ENCODE measurements at regions of chr6 and their contacts with region 1.

Region 1: GRCh38 chr6:25942561-25943147 is 12.2 kb upstream of the SLC17A2 start:
- DNase-seq: peak in 6 of 9 donors; percentile 11 to 42 (median 27)
- ATAC-seq: peak; percentile 62
- H3K4me3 ChIP-seq: no peak overlapping the region
- H3K4me3 Mint-ChIP-seq: no peak overlapping the region
- H3K27ac ChIP-seq: no peak overlapping the region
- H3K27ac Mint-ChIP-seq: no peak overlapping the region
- H3K4me1 ChIP-seq: no peaks in the 10 kb centered on the region
- H3K4me1 Mint-ChIP-seq: peaks cover 4 to 26% (median 7%) of the 10 kb centered on the region in 7 donors
- H3K27me3 ChIP-seq: no peaks in the 10 kb centered on the region
- H3K27me3 Mint-ChIP-seq: peaks cover 0 to 3% (median 0%) of the 10 kb centered on the region in 5 donors

Region 2: GRCh38 chr6:25263657-25264056 is 679.0 kb before region 1 on chr6:
- CTCF ChIA-PET with region 1: no interaction called
- POLR2A ChIA-PET with region 1: no interaction called
- intact Hi-C with region 1: loop called (anchors 2 to 5 kb)
- DNase-seq: no peak
- ATAC-seq: no peak
- H3K4me3 ChIP-seq: no peak overlapping the region
- H3K4me3 Mint-ChIP-seq: no peak overlapping the region
- H3K27ac ChIP-seq: no peak overlapping the region
- H3K27ac Mint-ChIP-seq: no peak overlapping the region
- H3K4me1 ChIP-seq: no peaks in the 10 kb centered on the region
- H3K4me1 Mint-ChIP-seq: peaks cover 0 to 4% (median 3%) of the 10 kb centered on the region in 7 donors
- H3K27me3 ChIP-seq: no peaks in the 10 kb centered on the region
- H3K27me3 Mint-ChIP-seq: peaks cover 0 to 25% (median 3%) of the 10 kb centered on the region in 5 donors

Region 3: DNA sequence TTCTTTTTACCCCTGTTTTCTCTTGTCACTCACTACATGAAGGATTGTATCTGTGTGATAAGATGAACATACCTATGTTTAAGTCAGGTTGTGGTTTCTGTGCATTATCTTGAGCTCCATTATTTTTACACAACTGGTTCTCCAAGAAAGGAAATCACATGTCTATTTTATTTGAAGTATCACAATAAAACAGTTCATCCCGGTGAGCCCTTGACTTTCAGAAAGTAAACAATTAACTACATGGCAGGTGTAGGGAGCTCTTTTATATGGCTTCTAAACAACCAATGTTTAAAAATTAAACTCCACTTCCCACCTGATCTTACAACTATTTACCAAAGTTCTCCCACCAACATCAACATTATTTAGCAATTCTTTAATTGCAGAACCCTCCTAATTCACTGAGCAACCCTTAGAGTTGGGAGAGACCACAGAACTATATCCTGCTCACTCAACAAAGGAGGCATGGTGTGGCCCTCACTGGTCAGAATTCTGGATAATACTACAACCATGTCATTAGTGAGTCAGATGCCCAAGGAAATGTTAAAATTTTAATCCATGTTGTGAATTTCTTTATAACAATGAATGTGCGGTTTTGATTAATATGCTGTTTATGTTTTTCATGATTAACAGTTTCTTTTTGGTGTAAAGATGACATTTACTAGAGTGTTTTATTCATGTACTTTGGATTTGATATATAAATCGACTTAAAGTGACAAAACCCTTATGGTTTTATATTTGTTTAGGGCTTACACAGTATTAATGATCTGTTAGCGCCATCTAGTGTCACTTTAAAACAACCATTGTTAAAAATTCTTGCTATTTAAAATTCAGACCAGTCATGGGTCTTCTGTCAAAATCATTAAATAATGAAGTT is 340.6 kb before region 1 on chr6:
- CTCF ChIA-PET with region 1: no interaction called
- POLR2A ChIA-PET with region 1: no interaction called
- intact Hi-C with region 1: loop called in 1 of 2 experiments (anchors 1 kb)
- DNase-seq: peak in 6 of 9 donors; percentile 3 to 48 (median 35)
- ATAC-seq: peak; percentile 64
- H3K4me3 ChIP-seq: no peak overlapping the region
- H3K4me3 Mint-ChIP-seq: no peak overlapping the region
- H3K27ac ChIP-seq: no peak overlapping the region
- H3K27ac Mint-ChIP-seq: peak overlapping the region in 2 of 9 donors; percentile 17 to 18
- H3K4me1 ChIP-seq: no peaks in the 10 kb centered on the region
- H3K4me1 Mint-ChIP-seq: peaks cover 0 to 19% (median 9%) of the 10 kb centered on the region in 7 donors
- H3K27me3 ChIP-seq: no peaks in the 10 kb centered on the region
- H3K27me3 Mint-ChIP-seq: no peaks in the 10 kb centered on the region

Region 4: DNA sequence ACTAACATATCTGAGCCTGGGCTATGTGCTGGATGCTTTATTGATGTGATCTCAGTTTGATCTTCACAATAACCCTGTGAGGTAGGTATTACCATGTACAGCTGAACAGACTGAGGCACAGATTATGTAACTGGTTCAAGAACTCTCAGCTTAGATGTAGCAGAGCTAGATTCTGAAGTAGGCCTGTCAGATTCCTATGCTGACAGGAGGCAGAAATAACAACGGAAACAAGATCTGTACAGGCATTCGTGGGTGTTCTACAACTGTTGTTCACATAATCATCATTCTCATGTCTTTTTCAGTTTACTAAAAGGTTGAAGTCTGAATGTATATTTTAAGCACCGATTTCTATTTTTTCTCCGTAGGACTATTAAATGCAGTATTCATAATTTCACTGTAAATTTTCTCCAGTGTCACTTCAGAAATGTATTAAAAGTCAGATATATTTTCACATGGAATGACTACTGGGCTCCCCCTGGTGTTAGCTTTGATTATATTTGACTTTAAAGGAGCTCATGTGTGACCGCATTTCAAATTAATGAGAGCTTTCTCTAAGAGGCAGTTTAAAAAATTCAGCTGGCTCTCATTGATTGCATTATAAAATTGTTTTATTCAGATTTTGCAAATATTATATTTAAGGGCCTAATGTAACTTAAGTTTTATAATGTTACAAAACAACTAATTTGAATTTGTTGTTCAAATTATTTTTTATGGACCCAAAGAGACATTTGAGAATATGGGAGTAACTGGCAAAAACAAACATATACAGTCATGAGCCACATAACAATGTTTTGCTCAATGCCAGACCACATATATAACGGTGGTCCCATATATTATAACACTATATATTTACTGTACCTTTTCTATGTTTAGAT is 224.6 kb before region 1 on chr6:
- CTCF ChIA-PET with region 1: interaction called, 9 read pairs
- POLR2A ChIA-PET with region 1: no interaction called
- intact Hi-C with region 1: loop called (anchors 1 kb)
- DNase-seq: peak in 4 of 9 donors; percentile 4 to 14 (median 10)
- ATAC-seq: no peak
- H3K4me3 ChIP-seq: no peak overlapping the region
- H3K4me3 Mint-ChIP-seq: no peak overlapping the region
- H3K27ac ChIP-seq: no peak overlapping the region
- H3K27ac Mint-ChIP-seq: no peak overlapping the region
- H3K4me1 ChIP-seq: no peaks in the 10 kb centered on the region
- H3K4me1 Mint-ChIP-seq: no peaks in the 10 kb centered on the region
- H3K27me3 ChIP-seq: no peaks in the 10 kb centered on the region
- H3K27me3 Mint-ChIP-seq: peaks cover 0 to 32% (median 12%) of the 10 kb centered on the region in 5 donors

Region 5: GRCh38 chr6:25788305-25788922 is 154.2 kb before region 1 on chr6:
- CTCF ChIA-PET with region 1: interaction called, 16 read pairs
- POLR2A ChIA-PET with region 1: no interaction called
- intact Hi-C with region 1: loop called (anchors 1 kb)
- DNase-seq: peak in 7 of 9 donors; percentile 5 to 34 (median 23)
- ATAC-seq: peak; percentile 70
- H3K4me3 ChIP-seq: no peak overlapping the region
- H3K4me3 Mint-ChIP-seq: no peak overlapping the region
- H3K27ac ChIP-seq: no peak overlapping the region
- H3K27ac Mint-ChIP-seq: no peak overlapping the region
- H3K4me1 ChIP-seq: no peaks in the 10 kb centered on the region
- H3K4me1 Mint-ChIP-seq: peaks cover 0 to 3% (median 0%) of the 10 kb centered on the region in 7 donors
- H3K27me3 ChIP-seq: no peaks in the 10 kb centered on the region
- H3K27me3 Mint-ChIP-seq: peaks cover 0 to 4% (median 0%) of the 10 kb centered on the region in 5 donors

Region 6: DNA sequence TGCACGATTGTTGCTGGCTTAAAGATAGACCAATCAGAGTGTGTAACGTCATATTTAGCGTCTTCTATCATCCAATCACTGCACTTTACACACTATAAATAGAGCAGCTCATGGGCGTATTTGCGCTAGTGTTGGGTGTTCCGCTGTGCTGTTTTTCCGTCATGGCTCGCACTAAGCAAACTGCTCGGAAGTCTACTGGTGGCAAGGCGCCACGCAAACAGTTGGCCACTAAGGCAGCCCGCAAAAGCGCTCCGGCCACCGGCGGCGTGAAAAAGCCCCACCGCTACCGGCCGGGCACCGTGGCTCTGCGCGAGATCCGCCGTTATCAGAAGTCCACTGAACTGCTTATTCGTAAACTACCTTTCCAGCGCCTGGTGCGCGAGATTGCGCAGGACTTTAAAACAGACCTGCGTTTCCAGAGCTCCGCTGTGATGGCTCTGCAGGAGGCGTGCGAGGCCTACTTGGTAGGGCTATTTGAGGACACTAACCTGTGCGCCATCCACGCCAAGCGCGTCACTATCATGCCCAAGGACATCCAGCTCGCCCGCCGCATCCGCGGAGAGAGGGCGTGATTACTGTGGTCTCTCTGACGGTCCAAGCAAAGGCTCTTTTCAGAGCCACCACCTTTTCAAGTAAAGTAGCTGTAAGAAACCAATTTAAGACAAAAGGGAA is 77.8 kb after region 1 on chr6:
- CTCF ChIA-PET with region 1: no interaction called
- POLR2A ChIA-PET with region 1: no interaction called
- intact Hi-C with region 1: loop called in 1 of 2 experiments (anchors 1 kb)
- DNase-seq: peak; percentile 68 to 94 (median 91)
- ATAC-seq: peak; percentile 66
- H3K4me3 ChIP-seq: peak overlapping the region; percentile 96
- H3K4me3 Mint-ChIP-seq: peak overlapping the region; percentile 82 to 100 (median 94)
- H3K27ac ChIP-seq: peak overlapping the region; percentile 97
- H3K27ac Mint-ChIP-seq: peak overlapping the region; percentile 95 to 100 (median 100)
- H3K4me1 ChIP-seq: peaks cover 0 to 10% of the 10 kb centered on the region in 2 donors
- H3K4me1 Mint-ChIP-seq: peaks cover 10 to 62% (median 45%) of the 10 kb centered on the region in 7 donors
- H3K27me3 ChIP-seq: no peaks in the 10 kb centered on the region
- H3K27me3 Mint-ChIP-seq: peaks cover 0 to 6% (median 0%) of the 10 kb centered on the region in 5 donors

Region 7: DNA sequence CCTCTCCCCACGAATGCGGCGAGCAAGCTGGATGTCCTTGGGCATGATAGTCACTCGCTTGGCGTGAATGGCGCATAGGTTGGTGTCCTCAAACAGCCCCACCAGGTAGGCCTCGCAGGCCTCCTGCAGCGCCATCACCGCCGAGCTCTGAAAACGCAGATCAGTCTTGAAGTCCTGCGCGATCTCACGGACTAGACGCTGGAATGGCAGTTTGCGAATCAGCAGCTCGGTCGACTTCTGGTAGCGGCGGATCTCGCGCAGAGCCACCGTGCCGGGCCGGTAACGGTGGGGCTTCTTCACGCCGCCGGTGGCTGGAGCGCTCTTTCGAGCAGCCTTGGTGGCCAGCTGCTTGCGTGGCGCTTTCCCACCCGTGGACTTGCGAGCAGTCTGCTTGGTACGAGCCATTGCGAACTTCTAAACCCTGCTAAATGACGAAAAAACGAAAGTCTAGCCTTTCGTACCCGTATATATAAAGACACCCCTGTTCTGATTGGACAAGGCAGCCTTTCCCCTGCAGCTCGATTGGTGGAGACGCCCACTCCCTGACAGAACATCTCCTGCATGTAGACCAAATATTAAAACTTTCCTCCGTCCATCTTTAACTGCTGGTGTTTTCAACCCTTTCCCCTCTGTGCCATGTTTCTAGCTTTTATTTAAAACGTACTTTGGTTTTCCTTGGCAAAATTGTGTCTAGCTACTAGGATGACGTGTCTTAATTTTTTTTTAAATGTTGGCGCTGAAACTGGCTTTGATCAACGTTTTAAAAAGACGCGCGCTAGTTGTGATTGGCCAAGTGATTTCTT is 254.4 kb after region 1 on chr6:
- CTCF ChIA-PET with region 1: no interaction called
- POLR2A ChIA-PET with region 1: no interaction called
- intact Hi-C with region 1: no loop called
- DNase-seq: peak; percentile 55 to 95 (median 93)
- ATAC-seq: peak; percentile 73
- H3K4me3 ChIP-seq: peak overlapping the region; percentile 92
- H3K4me3 Mint-ChIP-seq: peak overlapping the region; percentile 85 to 99 (median 96)
- H3K27ac ChIP-seq: peak overlapping the region; percentile 91
- H3K27ac Mint-ChIP-seq: peak overlapping the region; percentile 96 to 100 (median 98)
- H3K4me1 ChIP-seq: peaks cover 10 to 12% of the 10 kb centered on the region in 2 donors
- H3K4me1 Mint-ChIP-seq: peaks cover 23 to 65% (median 42%) of the 10 kb centered on the region in 7 donors
- H3K27me3 ChIP-seq: no peaks in the 10 kb centered on the region
- H3K27me3 Mint-ChIP-seq: peaks cover 0 to 12% (median 0%) of the 10 kb centered on the region in 5 donors